ENCODE measurements at regions of chr19 and their contacts with region 1.

Region 1: DNA sequence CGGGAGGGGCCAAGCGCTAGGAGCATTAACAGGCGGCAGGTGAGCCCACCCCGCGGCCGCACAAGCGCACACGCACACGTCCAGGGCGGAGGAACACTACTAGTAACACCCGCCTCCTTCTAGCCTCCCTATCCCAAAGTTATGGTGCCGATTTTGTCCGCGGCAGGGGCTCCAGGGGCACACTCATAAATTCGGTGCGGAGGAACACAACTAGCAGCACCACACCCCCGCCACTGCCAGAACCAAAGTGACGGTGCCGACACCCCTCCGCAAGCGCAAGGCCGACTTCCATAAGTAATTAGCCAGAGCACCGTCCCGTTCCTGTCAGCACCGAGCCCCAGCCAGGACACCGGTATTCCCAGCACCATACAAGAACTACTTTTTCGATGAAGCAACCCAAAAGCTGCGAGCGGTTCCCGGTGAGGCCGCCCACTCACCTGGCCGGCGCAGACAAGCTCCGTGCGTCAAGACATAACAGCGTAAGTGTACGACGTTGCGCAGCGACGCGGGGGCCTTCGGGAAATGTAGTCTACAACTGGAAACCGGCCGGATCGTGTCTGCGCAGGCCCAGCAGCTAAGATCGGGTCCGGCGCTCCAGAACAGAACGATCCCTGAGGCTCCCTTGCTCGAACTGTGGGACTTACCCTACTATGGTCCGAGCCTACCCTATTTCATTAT is at the starts of genes ZNF540 and ZNF571:
- DNase-seq: peak; percentile 83 to 95
- ATAC-seq: peak; percentile 86 to 96 (median 92)
- H3K4me3 ChIP-seq: peak within 1 kb of the TSS; percentile 74
- H3K4me3 Mint-ChIP-seq: peak within 1 kb of the TSS; percentile 99
- H3K27ac ChIP-seq: peak within 1 kb of the TSS; percentile 97
- H3K27ac Mint-ChIP-seq: peak within 1 kb of the TSS; percentile 97 to 99
- H3K4me1 ChIP-seq: peaks cover 15% of the 10 kb centered on the region
- H3K4me1 Mint-ChIP-seq: peaks cover 26 to 31% of the 10 kb centered on the region in 2 donors
- H3K27me3 ChIP-seq: no peaks in the 10 kb centered on the region
- H3K27me3 Mint-ChIP-seq: no peaks in the 10 kb centered on the region
- CTCF ChIP-seq: no peak
- total RNA-seq, gene ZNF540: 6.4 to 7.5 (median 7.0) TPM
- total RNA-seq, gene ZNF571: 11.7 to 22.1 (median 19.6) TPM

Region 2: DNA sequence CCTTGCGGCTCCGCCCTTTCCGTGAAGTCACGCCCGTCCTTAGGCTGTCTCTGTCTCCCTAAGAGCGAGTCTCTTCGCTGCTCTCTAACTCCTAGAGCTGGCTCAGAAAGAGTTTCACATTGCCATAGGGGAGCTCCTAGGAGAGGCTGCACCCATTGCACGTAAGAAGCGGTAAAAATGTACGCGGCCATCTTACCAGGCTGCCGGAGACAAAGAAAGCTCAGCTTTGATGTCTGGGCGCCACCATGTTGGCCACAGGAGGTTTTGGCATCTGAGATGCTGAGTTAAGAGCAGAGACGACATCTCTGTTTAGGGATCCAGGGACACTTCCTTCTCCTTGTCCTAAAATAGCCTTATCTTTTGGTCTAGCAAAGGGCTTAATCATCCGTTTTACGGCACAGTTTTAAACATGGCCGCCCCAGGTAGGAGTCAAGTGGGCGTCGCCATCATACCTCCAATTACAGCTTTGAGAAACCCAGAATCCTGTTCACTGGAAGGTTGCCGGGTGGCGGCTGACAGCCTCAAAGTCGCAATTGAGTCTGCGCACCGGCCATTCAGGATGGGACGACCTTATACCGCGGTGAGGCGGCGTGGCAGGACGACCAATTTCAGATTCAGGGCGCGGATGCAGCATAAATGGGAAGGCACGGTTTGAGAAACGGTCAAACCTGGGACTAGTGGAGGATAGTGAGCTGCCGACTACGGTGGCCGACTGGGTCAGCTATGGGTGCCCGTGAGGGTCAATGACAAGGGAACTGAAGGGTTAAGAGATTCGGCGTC is 87.9 kb before region 1 on chr19 and contains the start of gene ZNF793:
- intact Hi-C with region 1: loop called (anchors 2 kb)
- DNase-seq: peak; percentile 72 to 87
- ATAC-seq: peak; percentile 86 to 90 (median 87)
- H3K4me3 ChIP-seq: peak within 1 kb of the TSS; percentile 82
- H3K4me3 Mint-ChIP-seq: no peak within 1 kb of the TSS
- H3K27ac ChIP-seq: peak within 1 kb of the TSS; percentile 98
- H3K27ac Mint-ChIP-seq: no peak within 1 kb of the TSS
- H3K4me1 ChIP-seq: peaks cover 14% of the 10 kb centered on the region
- H3K4me1 Mint-ChIP-seq: no peaks in the 10 kb centered on the region
- H3K27me3 ChIP-seq: no peaks in the 10 kb centered on the region
- H3K27me3 Mint-ChIP-seq: no peaks in the 10 kb centered on the region
- CTCF ChIP-seq: no peak
- total RNA-seq, gene ZNF793: 3.1 to 9.6 (median 4.3) TPM

Region 3: GRCh38 chr19:37551129-37551993 is 43.1 kb before region 1 on chr19:
- intact Hi-C with region 1: loop called (anchors 1 kb)
- DNase-seq: peak; percentile 53 to 64
- ATAC-seq: peak; percentile 57 to 86 (median 78)
- H3K4me3 ChIP-seq: peak overlapping the region; percentile 58
- H3K4me3 Mint-ChIP-seq: peak overlapping the region; percentile 94
- H3K27ac ChIP-seq: peak overlapping the region; percentile 79
- H3K27ac Mint-ChIP-seq: peak overlapping the region; percentile 76 to 88
- H3K4me1 ChIP-seq: peaks cover 11% of the 10 kb centered on the region
- H3K4me1 Mint-ChIP-seq: peaks cover 10 to 12% of the 10 kb centered on the region in 2 donors
- H3K27me3 ChIP-seq: no peaks in the 10 kb centered on the region
- H3K27me3 Mint-ChIP-seq: no peaks in the 10 kb centered on the region
- CTCF ChIP-seq: peak; percentile 42

Region 4: DNA sequence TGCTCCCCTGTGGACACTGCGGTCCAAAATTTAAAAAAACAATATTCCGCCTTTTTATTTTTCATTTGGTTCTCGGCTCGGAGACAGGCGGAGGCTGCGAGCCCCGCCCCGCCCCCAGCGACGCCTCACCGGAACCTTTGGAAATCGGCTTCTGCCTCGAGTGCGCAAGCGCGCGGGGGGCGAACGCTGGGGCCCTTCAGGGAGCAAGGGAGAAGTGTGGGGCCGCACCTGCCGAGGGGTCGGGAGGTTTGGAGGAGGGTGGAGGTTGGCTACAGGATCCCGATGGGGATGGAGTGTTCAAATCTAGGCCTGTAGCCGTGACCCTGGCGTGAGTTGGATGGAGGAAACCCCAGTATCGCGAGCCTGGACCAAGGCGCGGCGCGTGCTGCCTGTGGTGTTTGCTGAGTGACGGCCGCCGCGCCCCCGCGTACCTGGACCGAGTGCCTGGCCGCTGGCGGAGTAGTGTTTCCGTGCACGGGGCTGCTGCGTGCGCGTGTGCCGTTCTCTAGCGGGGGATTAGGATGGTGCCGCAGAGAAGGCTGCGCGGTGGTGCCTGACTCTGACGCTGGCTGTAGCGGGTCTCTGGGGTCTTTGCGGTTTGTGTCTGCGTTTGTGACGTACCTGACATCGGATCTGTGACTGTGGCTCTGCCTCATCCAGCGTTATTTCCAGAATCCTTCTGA is 61.4 kb after region 1 on chr19:
- intact Hi-C with region 1: loop called (anchors 2 kb)
- DNase-seq: peak; percentile 69 to 88
- ATAC-seq: peak; percentile 76 to 85 (median 77)
- H3K4me3 ChIP-seq: peak overlapping the region; percentile 88
- H3K4me3 Mint-ChIP-seq: peak overlapping the region; percentile 97
- H3K27ac ChIP-seq: peak overlapping the region; percentile 90
- H3K27ac Mint-ChIP-seq: peak overlapping the region; percentile 80 to 99
- H3K4me1 ChIP-seq: peaks cover 15% of the 10 kb centered on the region
- H3K4me1 Mint-ChIP-seq: peaks cover 30 to 32% of the 10 kb centered on the region in 2 donors
- H3K27me3 ChIP-seq: no peaks in the 10 kb centered on the region
- H3K27me3 Mint-ChIP-seq: no peaks in the 10 kb centered on the region
- CTCF ChIP-seq: no peak

Region 5: GRCh38 chr19:37719111-37719926 is 124.9 kb after region 1 on chr19 and contains the start of gene ZNF607:
- intact Hi-C with region 1: loop called (anchors 1 kb)
- DNase-seq: peak; percentile 80 to 91
- ATAC-seq: peak; percentile 90 to 91 (median 90)
- H3K4me3 ChIP-seq: peak within 1 kb of the TSS; percentile 75
- H3K4me3 Mint-ChIP-seq: peak within 1 kb of the TSS; percentile 88
- H3K27ac ChIP-seq: peak within 1 kb of the TSS; percentile 65
- H3K27ac Mint-ChIP-seq: peak within 1 kb of the TSS; percentile 79 to 86
- H3K4me1 ChIP-seq: peaks cover 13% of the 10 kb centered on the region
- H3K4me1 Mint-ChIP-seq: peaks cover 9 to 20% of the 10 kb centered on the region in 2 donors
- H3K27me3 ChIP-seq: no peaks in the 10 kb centered on the region
- H3K27me3 Mint-ChIP-seq: no peaks in the 10 kb centered on the region
- CTCF ChIP-seq: no peak
- total RNA-seq, gene ZNF607: 4.6 to 5.1 (median 4.8) TPM